ENCODE measurements at regions of chr18 and their contacts with region 1.

Region 1: GRCh38 chr18:23131693-23132319 is 3.5 kb upstream of the CABLES1 start:
- DNase-seq: no peak
- ATAC-seq: peak; percentile 35
- H3K4me3 Mint-ChIP-seq: no peak overlapping the region
- H3K27ac Mint-ChIP-seq: no peak overlapping the region
- H3K4me1 Mint-ChIP-seq: peaks cover 27% of the 10 kb centered on the region
- H3K27me3 Mint-ChIP-seq: peaks cover 9% of the 10 kb centered on the region
- CTCF ChIP-seq: peak; percentile 72

Region 2: DNA sequence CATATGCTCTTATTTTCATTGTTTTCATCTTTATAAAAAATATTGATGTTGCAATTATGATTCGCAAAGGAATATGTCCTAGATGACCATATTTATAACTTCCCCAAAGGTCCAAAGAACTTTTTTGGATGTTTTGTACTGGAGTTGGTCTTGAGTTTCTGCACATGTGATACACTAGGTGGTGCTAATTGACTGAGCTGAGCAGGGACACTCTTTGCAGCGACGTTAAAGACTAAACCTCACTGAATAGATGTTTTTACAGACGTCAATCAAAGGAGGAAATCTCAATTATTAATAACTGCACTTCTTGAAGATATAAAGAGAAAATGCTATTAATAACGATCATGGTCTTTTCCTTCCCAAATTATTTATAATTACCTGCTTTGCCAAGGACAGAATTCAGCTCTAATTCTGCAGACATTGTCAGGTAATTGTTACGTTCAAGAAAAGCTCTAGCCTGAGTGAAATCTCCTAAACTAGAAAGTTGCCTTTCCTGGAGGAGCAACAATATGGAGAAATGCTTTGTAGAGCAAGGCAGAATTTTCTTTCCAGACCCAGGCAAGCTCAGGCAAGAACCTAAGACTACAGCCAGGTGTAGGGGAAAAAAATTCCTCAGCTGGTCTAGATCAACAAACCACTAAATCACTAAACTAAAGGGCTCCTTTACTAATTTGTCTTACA is 318.0 kb before region 1 on chr18:
- CTCF ChIA-PET with region 1: interaction called, 7 read pairs
- POLR2A ChIA-PET with region 1: no interaction called
- intact Hi-C with region 1: loop called (anchors 5 kb)
- DNase-seq: no peak
- ATAC-seq: peak; percentile 56
- H3K4me3 Mint-ChIP-seq: no peak overlapping the region
- H3K27ac Mint-ChIP-seq: no peak overlapping the region
- H3K4me1 Mint-ChIP-seq: no peaks in the 10 kb centered on the region
- H3K27me3 Mint-ChIP-seq: peaks cover 8% of the 10 kb centered on the region
- CTCF ChIP-seq: no peak

Region 3: DNA sequence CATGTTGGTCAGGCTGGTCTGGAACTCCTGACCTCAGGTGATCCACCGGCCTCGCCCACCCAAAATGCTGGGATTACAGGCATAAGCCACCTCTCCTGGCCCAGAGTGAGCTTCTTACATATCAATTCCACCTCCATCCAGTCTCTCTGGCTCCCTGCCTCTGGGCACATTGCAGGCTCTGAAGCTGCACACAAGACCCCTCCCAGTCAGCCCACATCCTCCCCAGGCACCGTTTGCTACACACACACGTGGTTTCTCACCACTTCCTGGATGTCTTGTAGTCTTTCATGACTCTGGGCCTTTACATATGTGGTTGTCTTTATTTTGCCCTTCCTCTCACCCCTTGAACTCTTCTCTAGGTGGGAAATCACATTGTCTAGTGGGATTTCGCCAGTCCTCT is 60.5 kb before region 1 on chr18:
- CTCF ChIA-PET with region 1: no interaction called
- POLR2A ChIA-PET with region 1: interaction called, 3 read pairs
- intact Hi-C with region 1: loop called (anchors 2 kb)
- DNase-seq: peak; percentile 26
- ATAC-seq: peak; percentile 95
- H3K4me3 Mint-ChIP-seq: peak overlapping the region; percentile 60
- H3K27ac Mint-ChIP-seq: peak overlapping the region; percentile 72
- H3K4me1 Mint-ChIP-seq: peaks cover 51% of the 10 kb centered on the region
- H3K27me3 Mint-ChIP-seq: no peaks in the 10 kb centered on the region
- CTCF ChIP-seq: no peak

Region 4: GRCh38 chr18:23213200-23213599 is 81.4 kb after region 1 on chr18:
- CTCF ChIA-PET with region 1: no interaction called
- POLR2A ChIA-PET with region 1: no interaction called
- intact Hi-C with region 1: no loop called
- DNase-seq: no peak
- ATAC-seq: no peak
- H3K4me3 Mint-ChIP-seq: no peak overlapping the region
- H3K27ac Mint-ChIP-seq: no peak overlapping the region
- H3K4me1 Mint-ChIP-seq: no peaks in the 10 kb centered on the region
- H3K27me3 Mint-ChIP-seq: peaks cover 5% of the 10 kb centered on the region
- CTCF ChIP-seq: no peak

Region 5: GRCh38 chr18:23237524-23238151 is 105.8 kb after region 1 on chr18:
- CTCF ChIA-PET with region 1: interaction called, 11 read pairs
- POLR2A ChIA-PET with region 1: interaction called, 47 read pairs
- intact Hi-C with region 1: loop called (anchors 1 kb)
- DNase-seq: peak; percentile 42
- ATAC-seq: peak; percentile 73
- H3K4me3 Mint-ChIP-seq: peak overlapping the region; percentile 75
- H3K27ac Mint-ChIP-seq: peak overlapping the region; percentile 70
- H3K4me1 Mint-ChIP-seq: peaks cover 57% of the 10 kb centered on the region
- H3K27me3 Mint-ChIP-seq: no peaks in the 10 kb centered on the region
- CTCF ChIP-seq: no peak

Region 6: DNA sequence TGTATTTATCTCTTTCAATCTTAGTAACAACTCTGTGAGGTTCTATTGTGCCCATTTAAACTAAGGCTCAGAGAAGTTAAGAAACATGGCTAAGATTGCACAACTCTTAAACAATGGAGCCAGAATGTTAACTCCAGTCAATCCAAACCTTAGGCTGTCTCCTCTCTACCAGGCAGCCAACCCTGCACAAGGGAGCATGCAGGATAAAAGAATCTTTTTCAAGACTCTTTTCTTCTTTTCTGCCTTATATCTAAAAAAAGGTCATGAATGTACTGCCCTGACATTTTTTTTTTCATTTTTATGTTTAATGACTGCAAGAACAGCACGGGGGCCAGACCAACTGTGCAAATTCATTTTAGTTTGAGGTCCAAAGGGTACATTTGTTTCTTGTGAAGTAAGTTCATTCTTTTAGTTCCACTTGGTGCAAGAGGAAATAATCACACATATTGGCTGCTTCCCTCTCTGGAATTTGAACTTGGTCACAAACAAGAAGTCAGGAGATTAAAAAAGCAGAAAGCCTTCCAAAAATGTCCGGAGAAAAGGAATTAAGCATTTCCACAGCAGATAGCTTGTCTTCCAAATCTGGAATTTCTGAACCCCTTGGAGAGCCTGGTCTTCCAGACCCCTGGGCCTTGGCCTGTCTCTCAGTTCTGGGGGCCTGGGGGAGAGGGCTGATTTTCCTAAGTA is 225.3 kb after region 1 on chr18:
- CTCF ChIA-PET with region 1: interaction called, 38 read pairs
- POLR2A ChIA-PET with region 1: interaction called, 16 read pairs
- intact Hi-C with region 1: loop called (anchors 1 kb)
- DNase-seq: no peak
- ATAC-seq: no peak
- H3K4me3 Mint-ChIP-seq: no peak overlapping the region
- H3K27ac Mint-ChIP-seq: no peak overlapping the region
- H3K4me1 Mint-ChIP-seq: peaks cover 33% of the 10 kb centered on the region
- H3K27me3 Mint-ChIP-seq: no peaks in the 10 kb centered on the region
- CTCF ChIP-seq: no peak

Region 7: DNA sequence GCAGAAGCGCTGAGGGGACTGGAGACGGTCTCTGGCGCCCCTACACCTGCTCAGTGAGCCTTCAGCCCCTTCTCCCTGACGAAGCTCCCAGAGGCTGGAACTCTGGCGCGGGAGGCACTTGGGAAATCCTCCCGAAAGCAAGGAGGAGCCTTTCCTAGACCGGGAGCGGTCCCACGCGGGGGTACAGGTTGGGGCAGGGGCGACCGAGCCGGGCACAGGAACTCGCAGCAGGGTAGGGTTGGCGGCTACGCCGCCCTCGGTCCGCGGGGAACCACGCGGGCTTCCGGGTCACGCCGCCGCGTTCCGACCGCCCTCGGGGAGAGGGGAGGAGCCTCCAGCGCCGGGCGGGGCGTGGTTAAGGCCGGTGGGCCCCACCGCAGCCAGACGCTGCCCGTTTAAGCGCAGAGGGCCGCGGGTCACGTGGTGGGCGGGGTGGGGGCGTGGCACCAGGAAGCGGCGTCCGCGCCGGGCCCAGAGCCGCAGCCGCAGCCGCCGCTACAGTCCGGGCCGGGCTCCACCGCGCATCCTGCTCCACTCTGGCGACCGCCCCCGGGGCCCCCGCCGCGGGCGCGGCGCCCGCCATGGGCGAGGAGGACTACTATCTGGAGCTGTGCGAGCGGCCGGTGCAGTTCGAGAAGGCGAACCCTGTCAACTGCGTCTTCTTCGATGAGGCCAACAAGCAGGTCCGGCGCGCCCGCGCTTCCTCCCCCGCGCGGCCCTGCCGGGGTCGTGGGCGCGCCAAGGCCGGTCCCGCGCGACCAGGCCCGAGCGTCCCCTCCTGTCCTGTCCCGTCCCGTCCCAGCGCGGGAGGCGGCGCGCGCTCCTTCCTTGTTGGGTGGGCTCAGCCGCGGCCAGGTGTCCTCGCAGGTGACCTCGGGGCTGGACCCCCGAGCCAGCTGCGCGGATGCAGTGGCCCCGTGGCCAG is 371.5 kb after region 1 on chr18 and contains the start of gene RMC1:
- CTCF ChIA-PET with region 1: interaction called, 5 read pairs
- POLR2A ChIA-PET with region 1: interaction called, 5 read pairs
- intact Hi-C with region 1: loop called (anchors 1 kb)
- DNase-seq: peak; percentile 100
- ATAC-seq: peak; percentile 89
- H3K4me3 Mint-ChIP-seq: peak within 1 kb of the TSS; percentile 93
- H3K27ac Mint-ChIP-seq: peak within 1 kb of the TSS; percentile 98
- H3K4me1 Mint-ChIP-seq: peaks cover 75% of the 10 kb centered on the region
- H3K27me3 Mint-ChIP-seq: no peaks in the 10 kb centered on the region
- CTCF ChIP-seq: no peak
- total RNA-seq, gene RMC1: 58.4 and 71.2 TPM in 2 replicates

Measured in activated B cell treated with CpG ODN at 0.5 μM for 24 hours (primary cell).